ENCODE measurements at regions of chr5 and their contacts with region 1.

Region 1: DNA sequence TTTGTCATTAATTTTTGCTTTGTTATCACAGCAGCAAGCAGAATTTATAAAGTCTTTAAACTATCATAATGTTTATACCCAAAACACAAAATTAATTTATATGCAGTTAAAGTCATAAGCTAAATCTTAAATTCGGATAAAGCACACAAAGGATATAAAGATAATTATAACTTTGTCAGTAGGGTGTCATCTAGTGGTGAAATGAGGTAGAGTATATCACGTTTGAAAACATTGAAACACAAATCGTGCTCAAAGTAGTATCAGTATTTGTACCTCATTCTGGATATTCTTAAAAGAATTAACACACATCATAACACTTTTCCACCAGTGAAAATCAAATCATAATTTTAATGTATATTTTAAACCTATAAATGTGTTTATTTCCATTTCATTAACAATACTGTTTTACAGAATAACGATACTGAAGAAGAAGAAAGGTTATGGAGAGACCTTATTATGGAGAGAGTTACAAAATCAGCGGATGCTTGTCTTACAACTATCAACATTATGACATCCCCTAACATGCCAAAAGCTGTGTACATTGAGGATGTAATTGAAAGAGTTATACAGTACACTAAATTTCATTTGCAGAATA is 129.5 kb downstream of the NIPBL start:
- DNase-seq: peak in 3 of 14 experiments; percentile 16 to 26 (median 26)
- ATAC-seq: peak; percentile 39
- H3K4me3 ChIP-seq: no peak overlapping the region
- H3K4me3 Mint-ChIP-seq: no peak overlapping the region
- H3K27ac ChIP-seq: no peak overlapping the region
- H3K27ac Mint-ChIP-seq: no peak overlapping the region
- H3K4me1 ChIP-seq: no peaks in the 10 kb centered on the region
- H3K4me1 Mint-ChIP-seq: no peaks in the 10 kb centered on the region
- H3K27me3 ChIP-seq: no peaks in the 10 kb centered on the region
- H3K27me3 Mint-ChIP-seq: no peaks in the 10 kb centered on the region
- CTCF ChIP-seq: peak; percentile 56

Region 2: GRCh38 chr5:37043688-37044087 is 37.6 kb after region 1 on chr5:
- CTCF ChIA-PET with region 1: interaction called, 3 read pairs
- POLR2A ChIA-PET with region 1: no interaction called
- intact Hi-C with region 1: loop called in 1 of 2 experiments (anchors 5 kb)
- DNase-seq: peak in 1 of 14 experiments; percentile 0
- ATAC-seq: no peak
- H3K4me3 ChIP-seq: no peak overlapping the region
- H3K4me3 Mint-ChIP-seq: no peak overlapping the region
- H3K27ac ChIP-seq: no peak overlapping the region
- H3K27ac Mint-ChIP-seq: no peak overlapping the region
- H3K4me1 ChIP-seq: no peaks in the 10 kb centered on the region
- H3K4me1 Mint-ChIP-seq: no peaks in the 10 kb centered on the region
- H3K27me3 ChIP-seq: no peaks in the 10 kb centered on the region
- H3K27me3 Mint-ChIP-seq: no peaks in the 10 kb centered on the region
- CTCF ChIP-seq: no peak

Region 3: GRCh38 chr5:37683072-37683471 is 677.0 kb after region 1 on chr5:
- CTCF ChIA-PET with region 1: no interaction called
- POLR2A ChIA-PET with region 1: no interaction called
- intact Hi-C with region 1: no loop called
- DNase-seq: no peak
- ATAC-seq: no peak
- H3K4me3 ChIP-seq: no peak overlapping the region
- H3K4me3 Mint-ChIP-seq: no peak overlapping the region
- H3K27ac ChIP-seq: no peak overlapping the region
- H3K27ac Mint-ChIP-seq: no peak overlapping the region
- H3K4me1 ChIP-seq: no peaks in the 10 kb centered on the region
- H3K4me1 Mint-ChIP-seq: no peaks in the 10 kb centered on the region
- H3K27me3 ChIP-seq: no peaks in the 10 kb centered on the region
- H3K27me3 Mint-ChIP-seq: no peaks in the 10 kb centered on the region
- CTCF ChIP-seq: no peak

Measured in CD4-positive, alpha-beta T cell (primary cell).